IMR-90 (cell line): ENCODE measurements at regions of chr21 and their contacts with region 1.

Region 1: DNA sequence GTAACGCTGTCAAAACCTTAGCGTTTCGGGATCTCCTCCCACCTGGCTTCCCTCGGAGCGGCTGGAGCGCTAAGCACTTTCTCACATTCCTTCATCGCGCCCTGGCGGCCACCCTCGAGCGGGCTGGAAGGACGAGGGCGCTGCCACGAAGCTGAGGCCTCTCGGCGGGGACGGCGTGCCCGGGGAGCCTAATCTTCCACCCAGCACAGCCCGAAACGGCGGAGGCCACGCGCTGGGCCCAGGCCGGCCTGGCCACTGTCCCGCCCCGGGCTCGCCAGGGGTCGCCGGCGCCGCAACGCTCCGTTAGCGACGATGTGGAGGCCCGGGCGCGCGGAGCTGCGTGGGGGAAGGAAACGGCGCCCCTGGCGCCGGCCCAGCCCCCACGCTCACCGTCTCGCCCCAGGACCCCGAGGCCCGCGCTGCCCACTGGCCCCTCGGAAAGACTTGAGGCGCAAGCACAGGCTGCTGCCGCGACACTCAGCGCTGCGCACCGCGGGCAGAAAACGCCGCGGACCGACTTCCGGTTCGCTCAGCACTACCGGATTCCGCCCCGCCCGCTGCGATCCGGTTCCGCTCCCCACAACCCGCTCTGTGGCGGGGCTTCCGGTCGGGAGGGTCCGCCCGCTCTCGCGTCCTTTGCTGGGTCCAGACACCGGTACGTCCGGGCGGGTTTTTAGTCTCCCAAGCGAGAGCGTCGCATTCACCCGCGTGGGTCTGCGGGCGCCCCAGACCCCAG is at the start of gene YBEY:
- DNase-seq: peak; percentile 91
- ATAC-seq: peak; percentile 89
- H3K4me3 ChIP-seq: peak within 1 kb of the TSS; percentile 69
- H3K27ac ChIP-seq: peak within 1 kb of the TSS; percentile 95
- H3K4me1 ChIP-seq: peaks cover 12% of the 10 kb centered on the region
- H3K27me3 ChIP-seq: no peaks in the 10 kb centered on the region
- CTCF ChIP-seq: peak; percentile 36
- POLR2A ChIP-seq: peak; percentile 71
- RAD21 ChIP-seq: peak; percentile 42; the same call in 1 of the 2 replicates
- total RNA-seq, gene YBEY: 5.9 and 7.8 TPM in 2 replicates

Region 2: DNA sequence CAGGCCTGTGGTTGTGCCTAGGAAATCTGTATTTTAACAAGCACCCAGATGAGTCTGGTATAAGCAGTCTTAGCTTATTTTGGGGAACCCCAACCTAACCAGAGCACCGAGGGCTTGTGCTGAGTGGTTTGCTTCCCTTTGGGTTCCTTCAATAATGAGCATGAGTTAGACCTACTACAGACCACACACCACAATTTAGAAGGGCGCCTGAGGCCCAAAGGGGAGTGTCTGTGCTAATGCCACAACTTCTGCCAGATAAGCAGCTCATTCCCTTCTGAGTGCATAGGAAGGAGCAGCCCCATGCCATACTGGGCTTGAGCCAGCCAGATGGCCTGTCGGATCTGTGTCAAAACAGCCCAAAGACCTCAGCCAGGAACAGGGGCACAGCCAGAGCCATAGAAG is 42.0 kb before region 1 on chr21:
- CTCF ChIA-PET with region 1: no interaction called
- POLR2A ChIA-PET with region 1: no interaction called
- dilution Hi-C with region 1: no loop called
- in situ Hi-C with region 1: no loop called
- intact Hi-C with region 1: loop called (anchors 5 kb)
- DNase-seq: no peak
- ATAC-seq: no peak
- H3K4me3 ChIP-seq: no peak overlapping the region
- H3K27ac ChIP-seq: no peak overlapping the region
- H3K4me1 ChIP-seq: no peaks in the 10 kb centered on the region; the same call in 1 of the 2 replicates
- H3K27me3 ChIP-seq: no peaks in the 10 kb centered on the region
- CTCF ChIP-seq: no peak
- POLR2A ChIP-seq: no peak
- RAD21 ChIP-seq: no peak

Region 3: DNA sequence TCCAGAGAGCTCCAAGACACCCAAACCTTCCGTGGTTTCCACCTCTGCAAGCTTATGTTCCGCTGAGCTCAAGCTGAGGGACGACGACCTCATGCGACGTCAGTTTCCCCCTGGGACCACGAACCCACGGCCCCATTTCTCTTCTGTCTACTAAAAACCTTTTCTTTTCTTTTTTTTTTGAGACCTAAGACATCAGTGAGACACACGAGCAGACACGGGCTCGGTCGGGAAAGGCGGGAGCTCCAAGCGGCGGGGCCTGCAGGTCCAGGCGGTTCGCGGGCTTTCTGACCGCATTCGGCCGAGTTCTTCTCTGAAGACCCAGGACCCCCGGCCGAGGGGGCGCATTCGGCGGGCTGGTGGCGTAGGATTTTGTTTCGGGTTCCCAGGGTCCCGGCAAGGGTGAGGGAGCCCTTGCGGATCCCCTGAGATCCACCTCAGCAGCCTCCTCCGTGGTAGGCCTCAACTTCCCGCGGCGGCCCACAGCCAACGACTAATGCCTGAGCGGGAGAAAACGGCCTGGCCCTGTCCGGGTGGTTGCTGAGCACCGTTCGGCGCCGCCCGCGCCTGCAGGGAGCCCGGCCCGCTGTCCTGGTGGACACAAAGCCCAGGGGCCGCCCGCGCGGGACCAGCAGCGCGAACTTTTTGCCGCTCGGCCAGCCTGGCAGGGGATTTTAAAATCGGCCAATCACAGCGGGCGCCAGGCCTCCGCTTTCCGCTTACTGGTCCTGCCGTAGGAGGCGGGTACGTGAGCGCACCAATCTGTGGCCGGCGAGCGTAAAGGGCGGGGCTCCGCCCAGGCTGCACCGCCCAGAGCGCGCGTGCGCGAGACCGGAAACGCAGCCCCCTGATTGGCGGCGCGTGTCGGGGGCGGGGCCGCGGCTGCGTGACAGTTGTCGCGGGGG is 37.5 kb after region 1 on chr21 and contains the start of gene C21orf58:
- CTCF ChIA-PET with region 1: no interaction called
- POLR2A ChIA-PET with region 1: no interaction called
- dilution Hi-C with region 1: no loop called
- in situ Hi-C with region 1: no loop called
- intact Hi-C with region 1: loop called (anchors 1 kb)
- DNase-seq: peak; percentile 97
- ATAC-seq: peak; percentile 85
- H3K4me3 ChIP-seq: peak within 1 kb of the TSS; percentile 85
- H3K27ac ChIP-seq: peak within 1 kb of the TSS; percentile 76
- H3K4me1 ChIP-seq: peaks cover 11% of the 10 kb centered on the region
- H3K27me3 ChIP-seq: no peaks in the 10 kb centered on the region
- CTCF ChIP-seq: no peak
- POLR2A ChIP-seq: no peak
- RAD21 ChIP-seq: no peak
- total RNA-seq, gene C21orf58: 2.5 and 2.7 TPM in 2 replicates